ENCODE measurements at regions of chr19 and their contacts with region 1.

Region 1: DNA sequence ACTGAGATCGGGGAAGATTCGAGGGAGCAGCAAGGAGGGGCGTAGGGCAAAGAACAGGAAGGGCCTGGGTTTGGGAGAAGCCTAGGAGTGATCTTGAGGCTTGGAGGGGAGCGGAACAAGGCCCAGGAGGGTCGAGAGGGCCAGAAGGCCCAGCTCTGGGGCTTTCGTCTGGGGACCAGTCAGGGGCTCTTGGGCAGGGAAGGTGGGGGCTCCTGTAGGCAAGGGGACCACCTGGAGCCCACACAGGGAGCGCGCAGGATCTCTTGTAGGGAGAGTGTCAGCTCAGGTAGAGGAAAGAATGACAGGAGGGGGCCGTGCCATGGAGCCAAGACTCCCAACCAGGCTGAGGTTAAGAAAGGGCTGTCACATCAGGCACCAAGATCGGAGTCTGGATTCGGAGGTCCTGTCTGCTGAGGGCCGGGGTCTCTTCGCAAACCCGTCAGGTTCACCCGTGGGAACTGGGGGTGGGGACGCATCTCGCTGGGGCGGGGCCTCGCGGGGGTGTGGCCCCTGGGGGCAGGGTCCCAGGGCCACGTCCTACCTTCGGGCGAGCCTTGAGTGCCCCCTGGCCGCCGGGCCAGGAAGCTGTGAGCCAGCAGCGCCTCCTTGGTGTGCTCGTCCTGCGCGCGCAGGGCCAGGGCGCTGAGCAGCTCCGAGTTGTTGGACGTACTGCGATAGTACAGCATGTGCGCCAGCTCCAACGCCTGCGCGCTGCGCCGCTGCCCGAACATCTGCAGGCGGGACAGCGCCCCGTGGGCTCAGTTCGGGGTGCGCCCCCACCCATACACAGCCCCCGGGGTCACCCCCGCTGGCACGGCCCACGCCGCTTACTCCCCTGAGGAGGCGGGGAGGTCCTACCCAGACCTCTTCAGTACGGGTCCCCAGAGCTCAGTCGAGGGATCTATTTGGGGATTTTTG is 8.4 kb downstream of the EMP3 start:
- DNase-seq: peak; percentile 92
- H3K4me3 ChIP-seq: peak overlapping the region in 2 of 3 experiments; percentile 20 to 33
- H3K27ac ChIP-seq: peak overlapping the region; percentile 64
- H3K4me1 ChIP-seq: peaks cover 16% of the 10 kb centered on the region
- H3K27me3 ChIP-seq: no peaks in the 10 kb centered on the region
- CTCF ChIP-seq: peak; percentile 77 to 94
- POLR2A ChIP-seq: no peak

Region 2: GRCh38 chr19:48321622-48322591 is 11.8 kb before region 1 on chr19:
- CTCF ChIA-PET with region 1: interaction called, 486 read pairs
- POLR2A ChIA-PET with region 1: interaction called, 6 read pairs
- dilution Hi-C with region 1: no loop called
- intact Hi-C with region 1: loop called (anchors 1 kb)
- DNase-seq: peak; percentile 98
- H3K4me3 ChIP-seq: peak overlapping the region in 2 of 3 experiments; percentile 38 to 40
- H3K27ac ChIP-seq: peak overlapping the region; percentile 97
- H3K4me1 ChIP-seq: peaks cover 27% of the 10 kb centered on the region
- H3K27me3 ChIP-seq: no peaks in the 10 kb centered on the region
- CTCF ChIP-seq: no peak
- POLR2A ChIP-seq: peak; percentile 82

Region 3: GRCh38 chr19:48480558-48481500 is 147.1 kb after region 1 on chr19:
- CTCF ChIA-PET with region 1: no interaction called
- POLR2A ChIA-PET with region 1: no interaction called
- dilution Hi-C with region 1: no loop called
- intact Hi-C with region 1: no loop called
- DNase-seq: peak; percentile 52
- H3K4me3 ChIP-seq: peak overlapping the region; percentile 27 to 36 (median 28)
- H3K27ac ChIP-seq: peak overlapping the region; percentile 65
- H3K4me1 ChIP-seq: peaks cover 23% of the 10 kb centered on the region
- H3K27me3 ChIP-seq: no peaks in the 10 kb centered on the region
- CTCF ChIP-seq: peak in 1 of 2 donors; percentile 5
- POLR2A ChIP-seq: peak; percentile 11